ENCODE measurements at regions of chr2 and their contacts with region 1.

Region 1: GRCh38 chr2:161238560-161239325 is 69.5 kb upstream of the PSMD14 start:
- DNase-seq: peak; percentile 35 to 70 (median 61)
- ATAC-seq: peak; percentile 80
- H3K4me3 ChIP-seq: peak overlapping the region; percentile 76
- H3K4me3 Mint-ChIP-seq: peak overlapping the region; percentile 83 to 98 (median 95)
- H3K27ac ChIP-seq: peak overlapping the region; percentile 27
- H3K27ac Mint-ChIP-seq: peak overlapping the region; percentile 57 to 90 (median 84)
- H3K4me1 ChIP-seq: peaks cover 17 to 26% of the 10 kb centered on the region in 2 donors
- H3K4me1 Mint-ChIP-seq: peaks cover 14 to 50% (median 43%) of the 10 kb centered on the region in 7 donors
- H3K27me3 ChIP-seq: no peaks in the 10 kb centered on the region
- H3K27me3 Mint-ChIP-seq: no peaks in the 10 kb centered on the region

Region 2: GRCh38 chr2:159286709-159287441 is 1951.9 kb before region 1 on chr2:
- CTCF ChIA-PET with region 1: no interaction called
- POLR2A ChIA-PET with region 1: no interaction called
- intact Hi-C with region 1: loop called in 1 of 2 experiments (anchors 10 kb)
- DNase-seq: peak; percentile 89 to 97 (median 94)
- ATAC-seq: peak; percentile 99
- H3K4me3 ChIP-seq: peak overlapping the region; percentile 72
- H3K4me3 Mint-ChIP-seq: peak overlapping the region; percentile 80 to 92 (median 89)
- H3K27ac ChIP-seq: peak overlapping the region; percentile 77
- H3K27ac Mint-ChIP-seq: peak overlapping the region; percentile 64 to 97 (median 85)
- H3K4me1 ChIP-seq: peaks cover 8 to 13% of the 10 kb centered on the region in 2 donors
- H3K4me1 Mint-ChIP-seq: peaks cover 15 to 36% (median 31%) of the 10 kb centered on the region in 7 donors
- H3K27me3 ChIP-seq: no peaks in the 10 kb centered on the region
- H3K27me3 Mint-ChIP-seq: no peaks in the 10 kb centered on the region

Region 3: DNA sequence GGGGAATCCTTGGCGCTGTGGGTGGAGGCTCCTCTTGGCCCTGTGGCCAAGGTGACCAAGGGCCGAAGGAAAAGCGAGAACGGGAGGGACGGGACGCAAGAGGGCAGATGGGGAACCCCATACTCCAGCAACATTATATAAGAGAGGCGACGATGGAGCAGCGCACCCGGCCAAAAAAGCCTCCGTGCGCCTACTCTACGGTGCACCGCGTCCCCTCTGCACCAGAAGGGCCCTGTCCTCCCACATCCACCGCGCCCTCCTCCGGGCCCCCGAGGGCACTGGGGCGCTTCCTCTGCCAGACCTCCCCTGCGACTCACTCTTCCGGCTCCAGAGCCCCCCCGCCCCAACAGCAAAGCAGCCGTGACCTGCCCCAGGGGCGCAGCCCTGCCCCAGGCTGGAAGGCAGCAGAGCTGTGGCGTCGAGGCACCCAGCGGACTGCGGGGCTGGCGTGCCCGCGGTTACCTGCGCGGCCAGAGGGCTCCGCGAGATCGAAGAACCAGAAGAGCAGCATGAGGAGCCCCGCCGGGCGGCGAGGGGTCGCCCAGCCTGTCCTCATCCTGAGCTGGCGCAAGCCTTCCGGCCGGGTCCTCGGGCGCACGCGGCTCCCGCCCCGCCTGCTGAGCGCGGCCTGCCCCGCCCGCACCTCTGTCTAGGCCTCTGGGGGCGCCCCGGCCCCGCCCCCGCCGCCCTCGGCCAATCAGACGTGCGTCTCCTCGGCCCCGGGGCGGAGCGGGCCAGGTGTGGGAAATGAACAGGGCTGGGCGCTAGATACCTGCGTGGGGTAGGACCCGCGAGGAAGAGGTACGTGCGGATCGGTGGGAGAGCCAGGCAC is 1334.4 kb before region 1 on chr2:
- CTCF ChIA-PET with region 1: no interaction called
- POLR2A ChIA-PET with region 1: no interaction called
- intact Hi-C with region 1: loop called in 1 of 2 experiments (anchors 10 kb)
- DNase-seq: peak; percentile 70 to 85 (median 83)
- ATAC-seq: peak; percentile 91
- H3K4me3 ChIP-seq: peak within 1 kb of the TSS; percentile 95
- H3K4me3 Mint-ChIP-seq: peak within 1 kb of the TSS; percentile 93 to 100 (median 98)
- H3K27ac ChIP-seq: peak within 1 kb of the TSS; percentile 87
- H3K27ac Mint-ChIP-seq: peak within 1 kb of the TSS; percentile 96 to 100 (median 98)
- H3K4me1 ChIP-seq: peaks cover 3 to 8% of the 10 kb centered on the region in 2 donors
- H3K4me1 Mint-ChIP-seq: peaks cover 24 to 52% (median 41%) of the 10 kb centered on the region in 7 donors
- H3K27me3 ChIP-seq: no peaks in the 10 kb centered on the region
- H3K27me3 Mint-ChIP-seq: peaks cover 0 to 3% (median 0%) of the 10 kb centered on the region in 5 donors

Region 4: GRCh38 chr2:161199912-161200701 is 38.6 kb before region 1 on chr2:
- CTCF ChIA-PET with region 1: no interaction called
- POLR2A ChIA-PET with region 1: no interaction called
- intact Hi-C with region 1: no loop called
- DNase-seq: no peak
- ATAC-seq: peak; percentile 41
- H3K4me3 ChIP-seq: no peak overlapping the region
- H3K4me3 Mint-ChIP-seq: peak overlapping the region in 5 of 10 donors; percentile 2 to 47 (median 39)
- H3K27ac ChIP-seq: no peak overlapping the region
- H3K27ac Mint-ChIP-seq: peak overlapping the region; percentile 2 to 85 (median 44)
- H3K4me1 ChIP-seq: peaks cover 0 to 16% of the 10 kb centered on the region in 2 donors
- H3K4me1 Mint-ChIP-seq: peaks cover 28 to 54% (median 43%) of the 10 kb centered on the region in 7 donors
- H3K27me3 ChIP-seq: no peaks in the 10 kb centered on the region
- H3K27me3 Mint-ChIP-seq: no peaks in the 10 kb centered on the region

Region 5: GRCh38 chr2:161223139-161223732 is 15.5 kb before region 1 on chr2:
- CTCF ChIA-PET with region 1: interaction called, 7 read pairs
- POLR2A ChIA-PET with region 1: interaction called, 3 read pairs
- intact Hi-C with region 1: loop called (anchors 1 to 2 kb)
- DNase-seq: peak in 7 of 9 donors; percentile 23 to 60 (median 55)
- ATAC-seq: peak; percentile 83
- H3K4me3 ChIP-seq: no peak overlapping the region
- H3K4me3 Mint-ChIP-seq: no peak overlapping the region
- H3K27ac ChIP-seq: no peak overlapping the region
- H3K27ac Mint-ChIP-seq: peak overlapping the region in 1 of 9 donors; percentile 5
- H3K4me1 ChIP-seq: no peaks in the 10 kb centered on the region
- H3K4me1 Mint-ChIP-seq: peaks cover 0 to 14% (median 0%) of the 10 kb centered on the region in 7 donors
- H3K27me3 ChIP-seq: no peaks in the 10 kb centered on the region
- H3K27me3 Mint-ChIP-seq: no peaks in the 10 kb centered on the region

Region 6: DNA sequence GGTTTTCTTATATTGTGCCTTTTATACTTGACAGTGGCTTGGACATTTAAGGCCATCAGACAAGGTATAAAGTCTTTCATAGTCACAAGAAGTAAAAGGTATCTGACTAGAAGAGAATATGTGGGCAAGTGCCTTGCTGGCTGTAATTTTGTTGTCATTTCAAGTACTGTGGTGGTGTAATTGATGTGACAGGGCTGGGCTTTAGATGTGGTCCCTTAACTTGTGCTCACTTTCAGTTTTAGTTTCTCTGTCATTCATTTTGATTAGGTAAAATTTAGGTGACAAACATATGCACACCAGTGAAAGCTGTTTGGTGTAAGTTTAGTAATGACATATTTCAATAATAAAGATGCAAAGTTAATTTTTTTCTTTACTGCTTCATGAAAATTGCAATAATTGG is 146.1 kb after region 1 on chr2:
- CTCF ChIA-PET with region 1: no interaction called
- POLR2A ChIA-PET with region 1: no interaction called
- intact Hi-C with region 1: loop called in 1 of 2 experiments (anchors 5 kb)
- DNase-seq: peak in 6 of 9 donors; percentile 8 to 49 (median 36)
- ATAC-seq: peak; percentile 78
- H3K4me3 ChIP-seq: no peak overlapping the region
- H3K4me3 Mint-ChIP-seq: peak overlapping the region in 2 of 10 donors; percentile 30 to 49
- H3K27ac ChIP-seq: no peak overlapping the region
- H3K27ac Mint-ChIP-seq: peak overlapping the region in 3 of 9 donors; percentile 30 to 41 (median 37)
- H3K4me1 ChIP-seq: peaks cover 8% of the 10 kb centered on the region in 2 donors
- H3K4me1 Mint-ChIP-seq: peaks cover 0 to 30% (median 13%) of the 10 kb centered on the region in 7 donors
- H3K27me3 ChIP-seq: no peaks in the 10 kb centered on the region
- H3K27me3 Mint-ChIP-seq: no peaks in the 10 kb centered on the region

Region 7: GRCh38 chr2:161486111-161486510 is 247.4 kb after region 1 on chr2:
- CTCF ChIA-PET with region 1: no interaction called
- POLR2A ChIA-PET with region 1: no interaction called
- intact Hi-C with region 1: no loop called
- DNase-seq: no peak
- ATAC-seq: no peak
- H3K4me3 ChIP-seq: no peak overlapping the region
- H3K4me3 Mint-ChIP-seq: no peak overlapping the region
- H3K27ac ChIP-seq: no peak overlapping the region
- H3K27ac Mint-ChIP-seq: no peak overlapping the region
- H3K4me1 ChIP-seq: no peaks in the 10 kb centered on the region
- H3K4me1 Mint-ChIP-seq: no peaks in the 10 kb centered on the region
- H3K27me3 ChIP-seq: no peaks in the 10 kb centered on the region
- H3K27me3 Mint-ChIP-seq: peaks cover 14 to 33% (median 18%) of the 10 kb centered on the region in 5 donors

Region 8: GRCh38 chr2:162013514-162014475 is 775.1 kb after region 1 on chr2:
- CTCF ChIA-PET with region 1: no interaction called
- POLR2A ChIA-PET with region 1: no interaction called
- intact Hi-C with region 1: loop called in 1 of 2 experiments (anchors 2 kb)
- DNase-seq: peak in 7 of 9 donors; percentile 30 to 71 (median 55)
- ATAC-seq: peak; percentile 36
- H3K4me3 ChIP-seq: peak overlapping the region; percentile 11
- H3K4me3 Mint-ChIP-seq: peak overlapping the region; percentile 52 to 86 (median 70)
- H3K27ac ChIP-seq: peak overlapping the region; percentile 95
- H3K27ac Mint-ChIP-seq: peak overlapping the region; percentile 94 to 99 (median 98)
- H3K4me1 ChIP-seq: peaks cover 47 to 72% of the 10 kb centered on the region in 2 donors
- H3K4me1 Mint-ChIP-seq: peaks cover 41 to 86% (median 81%) of the 10 kb centered on the region in 7 donors
- H3K27me3 ChIP-seq: no peaks in the 10 kb centered on the region
- H3K27me3 Mint-ChIP-seq: no peaks in the 10 kb centered on the region

Region 9: DNA sequence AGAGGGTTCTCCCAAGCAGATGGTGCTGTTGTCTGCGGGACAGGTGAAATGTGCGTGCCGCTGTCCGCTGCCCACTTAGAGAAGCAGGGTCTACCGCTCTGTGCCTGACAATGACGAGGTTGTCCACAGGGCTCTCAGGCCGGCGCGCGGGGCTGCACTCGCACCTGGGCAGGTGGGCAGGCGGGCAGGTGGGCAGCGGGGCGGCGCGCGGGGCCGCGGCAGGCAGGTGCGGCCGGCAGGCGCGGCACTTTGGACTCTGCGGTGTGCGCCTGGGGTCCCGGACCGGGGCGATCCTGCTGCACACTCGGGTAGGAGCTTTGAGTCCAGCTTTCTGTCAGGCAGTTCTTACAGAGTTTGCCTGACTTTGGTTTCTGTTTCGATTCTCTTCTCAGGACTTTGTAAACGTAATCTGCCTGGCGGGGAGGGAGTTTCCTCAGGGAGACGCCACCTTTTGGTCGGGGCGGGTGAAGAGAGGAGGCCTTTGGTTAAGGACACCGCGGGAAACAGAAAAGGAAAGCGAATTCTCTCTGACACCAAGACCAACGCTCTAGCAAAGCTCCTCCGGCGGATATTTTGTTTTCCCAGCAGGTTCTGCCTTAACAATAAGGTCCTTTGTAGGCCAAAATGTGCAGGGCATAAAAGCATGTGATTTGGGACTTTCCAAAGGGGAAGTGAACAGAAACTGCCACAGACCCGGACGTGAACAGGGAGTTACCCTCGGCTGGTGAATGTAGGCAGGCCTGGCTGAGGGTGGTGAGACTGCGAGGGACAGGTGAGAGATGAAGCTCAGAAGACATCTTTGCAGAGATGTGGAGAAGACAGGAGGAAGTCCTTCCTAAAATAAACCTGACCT is 1079.8 kb after region 1 on chr2 and contains the start of gene IFIH1:
- CTCF ChIA-PET with region 1: no interaction called
- POLR2A ChIA-PET with region 1: no interaction called
- intact Hi-C with region 1: loop called in 1 of 2 experiments (anchors 5 kb)
- DNase-seq: peak; percentile 60 to 86 (median 73)
- ATAC-seq: peak; percentile 93
- H3K4me3 ChIP-seq: peak within 1 kb of the TSS; percentile 93
- H3K4me3 Mint-ChIP-seq: peak within 1 kb of the TSS; percentile 89 to 100 (median 95)
- H3K27ac ChIP-seq: peak within 1 kb of the TSS; percentile 85
- H3K27ac Mint-ChIP-seq: peak within 1 kb of the TSS; percentile 97 to 100 (median 99)
- H3K4me1 ChIP-seq: peaks cover 22 to 40% of the 10 kb centered on the region in 2 donors
- H3K4me1 Mint-ChIP-seq: peaks cover 43 to 69% (median 62%) of the 10 kb centered on the region in 7 donors
- H3K27me3 ChIP-seq: no peaks in the 10 kb centered on the region
- H3K27me3 Mint-ChIP-seq: no peaks in the 10 kb centered on the region
- total RNA-seq, gene IFIH1: 20.6 to 77.9 (median 30.7) TPM

Measured in naive thymus-derived CD4-positive, alpha-beta T cell (primary cell).